Aorta (tissue), 5 donors: ENCODE measurements at regions of chr20 and their contacts with region 1.

Region 1: DNA sequence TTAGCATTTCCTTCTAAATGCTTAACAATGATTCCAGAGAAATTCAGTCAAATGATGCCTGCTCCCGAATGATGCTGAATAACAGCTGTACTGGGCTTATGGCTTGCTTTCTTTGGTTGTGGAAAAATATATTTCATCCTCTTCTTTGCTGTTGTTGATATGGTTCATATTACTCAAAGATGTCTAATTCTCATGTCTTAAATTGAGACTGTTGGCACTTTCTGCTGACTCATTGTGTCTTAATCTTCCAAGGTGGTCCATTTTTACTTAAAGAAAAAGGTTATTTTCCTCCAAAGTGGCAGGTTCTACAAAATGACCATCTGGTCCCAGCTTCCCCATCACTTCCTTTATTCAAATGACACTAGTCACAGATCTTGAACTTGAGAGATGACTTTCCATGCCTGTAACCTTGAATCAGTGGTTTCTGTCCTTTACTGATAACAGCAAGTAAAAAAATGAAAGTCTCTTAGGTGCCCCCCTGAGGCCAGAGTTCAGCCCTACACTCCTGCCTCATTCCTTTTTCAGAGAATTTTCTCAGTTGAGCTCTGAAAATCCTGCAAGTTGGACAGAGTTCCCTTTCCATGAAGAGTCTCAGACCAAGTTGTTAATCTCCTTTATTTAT is 6.9 kb downstream of the SNAP25 start:
- DNase-seq: no peak
- ATAC-seq: no peak
- H3K4me3 ChIP-seq: no peak overlapping the region
- H3K27ac ChIP-seq: no peak overlapping the region
- H3K4me1 ChIP-seq: no peaks in the 10 kb centered on the region
- H3K27me3 ChIP-seq: peaks cover 0 to 3% of the 10 kb centered on the region in 2 donors

Region 2: GRCh38 chr20:10427060-10427692 is 201.6 kb after region 1 on chr20:
- intact Hi-C with region 1: loop called in 1 of 2 experiments (anchors 10 kb)
- DNase-seq: peak; percentile 67 to 80
- ATAC-seq: no peak
- H3K4me3 ChIP-seq: no peak overlapping the region
- H3K27ac ChIP-seq: no peak overlapping the region
- H3K4me1 ChIP-seq: no peaks in the 10 kb centered on the region
- H3K27me3 ChIP-seq: no peaks in the 10 kb centered on the region